Common myeloid progenitor, CD34-positive (primary cell): ENCODE measurements at regions of chr6 and their contacts with region 1.

Region 1: DNA sequence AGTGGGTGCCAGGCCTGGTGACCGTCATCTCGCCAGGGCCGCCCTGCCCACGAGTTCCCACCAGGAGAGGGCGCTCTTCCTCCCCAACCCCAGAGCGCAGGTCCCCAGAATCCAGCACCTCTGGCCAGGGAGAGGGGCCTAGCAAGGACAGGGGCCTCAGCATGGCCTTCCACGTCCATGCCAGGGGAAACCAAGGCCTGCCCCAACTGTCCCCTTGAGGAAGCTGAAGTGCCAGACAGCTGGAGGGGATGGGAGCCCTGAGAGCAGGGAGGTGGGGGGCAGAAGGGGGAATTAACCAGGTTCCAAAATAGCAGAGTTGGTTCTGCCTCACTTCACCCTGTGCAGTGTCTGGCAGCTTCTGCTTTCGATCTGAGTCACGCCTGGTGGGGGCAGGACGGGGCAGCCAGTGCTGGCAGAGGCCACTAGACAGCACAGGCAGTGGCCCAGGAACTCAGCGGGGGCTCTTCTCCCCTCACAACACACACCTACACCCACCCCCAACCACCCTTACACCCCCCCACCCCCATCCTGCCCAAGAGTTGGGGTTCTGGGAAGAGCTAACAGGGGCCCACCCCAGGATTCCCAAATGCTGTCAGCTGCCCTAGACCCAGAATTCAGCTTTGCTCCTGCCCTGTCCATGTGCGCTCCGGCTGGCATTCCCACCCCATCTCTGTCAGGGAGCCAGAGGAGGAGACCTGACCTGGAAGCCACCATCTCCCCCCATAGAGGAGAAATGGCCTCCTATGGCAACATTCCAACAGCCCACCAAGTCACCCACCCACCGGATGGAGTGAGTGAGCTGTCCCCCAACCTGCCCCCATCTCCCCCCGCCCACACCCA is 29.2 kb downstream of the TFEB start:
- DNase-seq: peak; percentile 63 to 88 (median 86)
- H3K4me3 ChIP-seq: no peak overlapping the region
- H3K27ac ChIP-seq: no peak overlapping the region
- H3K4me1 ChIP-seq: peaks cover 2 to 36% (median 27%) of the 10 kb centered on the region in 4 experiments
- H3K27me3 ChIP-seq: no peaks in the 10 kb centered on the region

Region 2: DNA sequence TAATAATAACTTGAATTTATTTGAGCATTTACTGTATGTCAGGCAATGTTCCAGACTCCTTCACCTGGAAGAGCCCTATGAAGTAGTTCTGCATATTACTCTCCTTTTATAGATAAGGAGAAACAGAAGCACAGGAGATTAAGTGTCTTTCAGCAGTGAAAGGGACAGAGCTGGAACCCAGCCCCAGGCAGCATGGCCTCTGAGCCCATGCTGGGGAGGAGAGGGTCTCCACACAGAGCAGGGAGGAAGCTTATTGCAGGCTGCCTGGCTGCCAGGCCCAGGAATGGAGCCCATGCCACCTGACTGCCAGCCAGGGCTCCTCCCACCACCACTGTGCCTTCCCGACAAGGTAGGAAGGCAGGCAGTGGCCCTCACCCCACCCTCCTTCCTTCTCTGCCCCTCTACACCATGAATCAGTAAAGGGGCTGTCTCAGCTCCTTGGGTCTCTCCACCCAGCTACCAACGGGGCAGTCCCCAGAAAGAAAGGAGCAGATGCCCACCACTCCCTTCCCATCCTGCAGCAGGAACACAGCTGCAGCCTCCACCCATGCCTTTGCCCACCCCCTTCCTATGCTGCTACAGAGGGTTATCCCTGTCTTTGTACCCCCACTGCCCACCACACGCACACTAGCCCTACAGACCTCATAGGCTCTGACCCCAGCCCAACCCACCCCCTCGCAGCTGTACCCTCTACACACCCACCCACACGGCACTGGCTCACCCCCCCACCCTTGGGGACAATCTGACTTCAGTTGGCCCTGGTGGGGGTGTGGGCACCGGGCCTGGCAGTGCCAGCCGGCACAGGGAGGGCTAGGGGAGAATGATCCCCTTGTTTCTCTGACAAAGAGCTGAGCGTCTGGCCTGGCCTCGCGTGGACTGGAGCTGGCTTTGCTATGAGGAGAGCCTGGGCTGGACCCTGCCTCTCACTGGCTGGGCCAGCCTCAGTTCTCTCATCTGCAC is 12.7 kb before region 1 on chr6:
- CTCF ChIA-PET with region 1: interaction called, 57 read pairs
- POLR2A ChIA-PET with region 1: no interaction called
- DNase-seq: peak in 2 of 3 donors; percentile 12 to 22
- H3K4me3 ChIP-seq: no peak overlapping the region
- H3K27ac ChIP-seq: no peak overlapping the region
- H3K4me1 ChIP-seq: peaks cover 0 to 15% (median 2%) of the 10 kb centered on the region in 4 experiments
- H3K27me3 ChIP-seq: no peaks in the 10 kb centered on the region

Region 3: GRCh38 chr6:41735427-41736356 is 29.5 kb after region 1 on chr6 and contains the start of gene TFEB:
- CTCF ChIA-PET with region 1: interaction called, 90 read pairs
- POLR2A ChIA-PET with region 1: interaction called, 4 read pairs
- DNase-seq: peak; percentile 89 to 93 (median 92)
- H3K4me3 ChIP-seq: peak within 1 kb of the TSS; percentile 56 to 85 (median 69)
- H3K27ac ChIP-seq: no peak within 1 kb of the TSS
- H3K4me1 ChIP-seq: peaks cover 0 to 38% (median 22%) of the 10 kb centered on the region in 4 experiments
- H3K27me3 ChIP-seq: no peaks in the 10 kb centered on the region

Region 4: GRCh38 chr6:41775293-41776181 is 69.3 kb after region 1 on chr6:
- CTCF ChIA-PET with region 1: interaction called, 98 read pairs
- POLR2A ChIA-PET with region 1: no interaction called
- DNase-seq: peak; percentile 78 to 88 (median 86)
- H3K4me3 ChIP-seq: no peak overlapping the region
- H3K27ac ChIP-seq: no peak overlapping the region
- H3K4me1 ChIP-seq: peaks cover 17 to 32% (median 31%) of the 10 kb centered on the region in 4 experiments
- H3K27me3 ChIP-seq: no peaks in the 10 kb centered on the region

Region 5: GRCh38 chr6:41836022-41836659 is 129.9 kb after region 1 on chr6:
- CTCF ChIA-PET with region 1: no interaction called
- POLR2A ChIA-PET with region 1: no interaction called
- DNase-seq: no peak
- H3K4me3 ChIP-seq: no peak overlapping the region
- H3K27ac ChIP-seq: peak overlapping the region in 1 of 2 experiments; percentile 34
- H3K4me1 ChIP-seq: no peaks in the 10 kb centered on the region
- H3K27me3 ChIP-seq: no peaks in the 10 kb centered on the region

Region 6: GRCh38 chr6:41958022-41958856 is 252.0 kb after region 1 on chr6:
- CTCF ChIA-PET with region 1: no interaction called
- POLR2A ChIA-PET with region 1: no interaction called
- DNase-seq: peak in 1 of 3 donors; percentile 22
- H3K4me3 ChIP-seq: no peak overlapping the region
- H3K27ac ChIP-seq: no peak overlapping the region
- H3K4me1 ChIP-seq: peaks cover 0 to 7% (median 4%) of the 10 kb centered on the region in 4 experiments
- H3K27me3 ChIP-seq: no peaks in the 10 kb centered on the region